Naive thymus-derived CD4-positive, alpha-beta T cell (primary cell): ENCODE measurements at regions of chr4 and their contacts with region 1.

Region 1: GRCh38 chr4:109588176-109588575 is 28.1 kb downstream of the MCUB start:
- DNase-seq: peak in 7 of 9 donors; percentile 11 to 36 (median 24)
- ATAC-seq: peak; percentile 61
- H3K4me3 ChIP-seq: no peak overlapping the region
- H3K4me3 Mint-ChIP-seq: peak overlapping the region in 9 of 10 donors; percentile 13 to 73 (median 54)
- H3K27ac ChIP-seq: peak overlapping the region; percentile 42
- H3K27ac Mint-ChIP-seq: peak overlapping the region; percentile 34 to 91 (median 75)
- H3K4me1 ChIP-seq: peaks cover 10 to 33% of the 10 kb centered on the region in 2 donors
- H3K4me1 Mint-ChIP-seq: peaks cover 48 to 100% (median 79%) of the 10 kb centered on the region in 7 donors
- H3K27me3 ChIP-seq: no peaks in the 10 kb centered on the region
- H3K27me3 Mint-ChIP-seq: no peaks in the 10 kb centered on the region

Region 2: DNA sequence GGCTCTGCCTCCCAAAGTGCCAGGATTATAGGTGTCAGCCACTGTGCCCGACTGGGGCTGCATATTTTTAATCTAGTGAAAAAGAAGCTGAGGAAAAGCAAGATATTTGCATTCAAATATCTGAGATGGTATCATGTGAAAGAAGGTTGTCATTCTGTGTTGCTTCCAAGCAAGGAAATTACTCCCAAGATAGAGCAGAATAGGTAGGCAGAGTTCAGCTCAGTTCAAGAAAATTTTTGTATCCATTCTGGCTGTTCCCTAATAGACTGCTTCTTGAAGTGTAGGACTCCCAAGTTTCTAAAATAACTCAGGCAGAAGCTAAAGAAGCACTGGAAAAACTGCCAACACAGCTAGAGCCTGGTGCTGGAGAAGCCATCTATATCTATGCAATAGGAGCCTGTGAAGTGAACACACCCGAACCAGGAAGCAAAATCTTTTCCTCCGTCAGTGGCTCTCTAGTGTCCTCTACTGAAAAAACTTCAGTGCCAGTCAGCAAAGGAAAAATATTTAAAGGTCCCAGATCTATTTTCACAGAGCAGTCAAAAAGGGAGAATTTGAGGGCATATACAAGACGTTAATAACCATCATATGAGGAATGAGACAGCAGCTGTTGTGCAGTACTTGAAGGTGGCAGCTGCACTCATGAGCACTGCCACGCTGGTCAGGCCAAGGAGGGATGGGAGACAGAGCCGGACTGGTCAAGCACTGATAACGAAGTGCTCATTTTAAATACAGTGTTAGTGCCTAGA is 13.9 kb before region 1 on chr4:
- CTCF ChIA-PET with region 1: interaction called, 8 read pairs
- POLR2A ChIA-PET with region 1: interaction called, 6 read pairs
- intact Hi-C with region 1: loop called in 1 of 2 experiments (anchors 1 kb)
- DNase-seq: peak in 7 of 9 donors; percentile 24 to 61 (median 51)
- ATAC-seq: peak; percentile 82
- H3K4me3 ChIP-seq: peak overlapping the region; percentile 17
- H3K4me3 Mint-ChIP-seq: peak overlapping the region; percentile 42 to 83 (median 70)
- H3K27ac ChIP-seq: no peak overlapping the region
- H3K27ac Mint-ChIP-seq: peak overlapping the region in 8 of 9 donors; percentile 26 to 89 (median 75)
- H3K4me1 ChIP-seq: peaks cover 31 to 32% of the 10 kb centered on the region in 2 donors
- H3K4me1 Mint-ChIP-seq: peaks cover 47 to 91% (median 79%) of the 10 kb centered on the region in 7 donors
- H3K27me3 ChIP-seq: no peaks in the 10 kb centered on the region
- H3K27me3 Mint-ChIP-seq: no peaks in the 10 kb centered on the region

Region 3: GRCh38 chr4:109611045-109611646 is 23.0 kb after region 1 on chr4:
- CTCF ChIA-PET with region 1: no interaction called
- POLR2A ChIA-PET with region 1: no interaction called
- intact Hi-C with region 1: loop called in 1 of 2 experiments (anchors 2 kb)
- DNase-seq: no peak
- ATAC-seq: no peak
- H3K4me3 ChIP-seq: no peak overlapping the region
- H3K4me3 Mint-ChIP-seq: peak overlapping the region in 2 of 10 donors; percentile 42 to 64
- H3K27ac ChIP-seq: no peak overlapping the region
- H3K27ac Mint-ChIP-seq: peak overlapping the region in 2 of 9 donors; percentile 21 to 36
- H3K4me1 ChIP-seq: peaks cover 0 to 12% of the 10 kb centered on the region in 2 donors
- H3K4me1 Mint-ChIP-seq: peaks cover 39 to 96% (median 84%) of the 10 kb centered on the region in 7 donors
- H3K27me3 ChIP-seq: no peaks in the 10 kb centered on the region
- H3K27me3 Mint-ChIP-seq: no peaks in the 10 kb centered on the region